ENCODE measurements at regions of chr12 and their contacts with region 1.

Region 1: DNA sequence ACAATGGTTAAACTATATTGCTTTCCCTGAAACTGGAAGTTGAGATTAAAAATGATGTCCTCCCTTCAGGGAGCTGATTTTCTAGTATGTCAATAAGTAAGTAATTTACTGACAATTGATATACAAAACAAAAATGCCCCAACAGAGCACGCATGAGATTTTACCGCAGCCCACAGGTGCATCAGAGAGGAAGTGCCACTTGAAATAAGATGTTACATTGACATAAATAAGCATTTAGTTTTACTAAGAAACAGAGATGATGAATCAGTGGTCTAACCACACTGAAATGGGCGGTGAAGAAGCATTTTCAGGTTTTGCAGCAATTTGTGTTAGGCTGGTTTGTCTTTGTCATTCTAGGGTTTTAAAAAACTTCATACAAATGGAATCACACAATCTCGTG is 8.8 kb upstream of the CLECL1 start:
- DNase-seq: peak; percentile 94
- H3K4me3 Mint-ChIP-seq: peak overlapping the region; percentile 57
- H3K27ac Mint-ChIP-seq: peak overlapping the region; percentile 96
- H3K4me1 Mint-ChIP-seq: peaks cover 61% of the 10 kb centered on the region
- H3K27me3 Mint-ChIP-seq: no peaks in the 10 kb centered on the region

Region 2: DNA sequence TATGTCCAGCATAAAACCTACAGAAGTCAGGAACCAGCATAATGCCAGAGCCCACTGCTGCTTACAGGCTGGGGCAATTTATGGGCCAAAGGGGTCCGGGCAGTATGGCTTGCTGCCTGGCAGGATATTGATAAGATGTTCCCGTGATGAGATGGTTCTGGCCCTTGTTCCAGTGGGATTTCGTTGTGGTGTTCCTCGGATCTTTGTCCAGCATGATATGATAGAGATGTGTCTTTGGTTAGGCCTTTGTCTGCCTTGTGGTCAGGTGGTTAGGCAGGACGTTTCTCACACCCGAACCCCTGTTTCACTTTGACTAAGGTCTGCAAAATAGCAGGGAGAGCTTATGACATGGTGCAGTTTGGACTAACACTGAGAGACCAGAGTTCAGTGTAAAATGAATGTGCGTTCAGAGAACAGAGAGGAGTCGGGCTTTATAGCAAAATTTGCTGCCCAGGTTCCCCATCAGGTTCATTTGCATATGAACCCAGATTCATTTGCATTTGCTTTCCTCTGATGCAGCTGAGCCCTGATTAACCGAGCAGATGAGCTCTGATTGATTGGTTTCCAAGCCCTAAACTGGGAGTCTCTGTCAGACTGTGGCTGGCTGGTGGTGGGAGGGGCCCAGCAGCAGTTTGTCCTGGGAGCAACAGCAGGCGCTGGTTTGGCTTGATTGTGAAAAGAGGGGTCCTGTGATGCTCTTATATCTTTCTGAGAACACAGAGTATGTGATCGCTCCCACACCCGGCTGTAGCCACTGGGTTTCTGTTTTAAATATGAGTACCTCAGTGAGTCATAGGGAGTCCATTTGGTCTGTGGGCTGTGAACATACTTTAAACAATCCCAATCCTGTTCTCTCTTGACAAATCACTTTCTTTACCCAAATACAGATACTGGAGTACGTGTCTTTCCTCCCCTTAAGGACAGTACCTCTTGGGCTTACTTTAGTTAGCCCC is 377.2 kb before region 1 on chr12:
- intact Hi-C with region 1: loop called (anchors 10 kb)
- DNase-seq: peak; percentile 81
- H3K4me3 Mint-ChIP-seq: peak overlapping the region; percentile 66
- H3K27ac Mint-ChIP-seq: peak overlapping the region; percentile 88
- H3K4me1 Mint-ChIP-seq: peaks cover 40% of the 10 kb centered on the region
- H3K27me3 Mint-ChIP-seq: peaks cover 33% of the 10 kb centered on the region

Region 3: DNA sequence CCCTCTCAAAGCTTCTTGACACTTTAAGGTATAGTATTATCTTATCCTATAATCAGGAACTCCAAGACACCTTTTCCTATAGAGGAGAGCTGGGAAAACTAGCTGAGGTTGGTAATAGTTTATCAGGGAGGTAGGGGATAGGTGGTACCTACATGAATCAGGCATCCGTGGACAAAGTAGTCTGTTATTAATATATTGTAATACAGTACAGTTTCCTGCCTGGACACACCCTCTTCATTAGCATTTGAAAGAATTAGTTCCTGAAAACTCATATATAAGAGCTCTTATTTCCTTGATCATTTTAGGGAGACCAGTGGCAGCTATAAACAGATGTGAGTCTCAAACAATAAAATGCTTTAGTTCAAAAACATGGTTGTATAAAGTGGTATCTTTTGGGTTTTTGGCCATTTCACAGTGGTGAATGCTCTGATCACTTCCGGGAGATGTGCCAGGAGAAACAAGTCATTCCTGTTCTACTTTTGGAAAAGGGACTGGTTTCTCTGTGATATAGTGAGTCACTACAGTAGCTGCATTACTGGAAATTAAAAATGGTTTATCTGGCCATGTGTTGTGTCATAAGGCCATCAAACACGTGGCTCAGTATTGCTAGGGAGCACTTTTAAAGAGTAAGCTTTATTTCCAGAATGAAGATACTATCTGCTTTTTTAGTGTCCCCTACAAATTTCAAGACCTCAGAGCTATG is 232.1 kb before region 1 on chr12:
- intact Hi-C with region 1: no loop called
- DNase-seq: no peak
- H3K4me3 Mint-ChIP-seq: no peak overlapping the region
- H3K27ac Mint-ChIP-seq: no peak overlapping the region
- H3K4me1 Mint-ChIP-seq: peaks cover 3% of the 10 kb centered on the region
- H3K27me3 Mint-ChIP-seq: no peaks in the 10 kb centered on the region

Region 4: DNA sequence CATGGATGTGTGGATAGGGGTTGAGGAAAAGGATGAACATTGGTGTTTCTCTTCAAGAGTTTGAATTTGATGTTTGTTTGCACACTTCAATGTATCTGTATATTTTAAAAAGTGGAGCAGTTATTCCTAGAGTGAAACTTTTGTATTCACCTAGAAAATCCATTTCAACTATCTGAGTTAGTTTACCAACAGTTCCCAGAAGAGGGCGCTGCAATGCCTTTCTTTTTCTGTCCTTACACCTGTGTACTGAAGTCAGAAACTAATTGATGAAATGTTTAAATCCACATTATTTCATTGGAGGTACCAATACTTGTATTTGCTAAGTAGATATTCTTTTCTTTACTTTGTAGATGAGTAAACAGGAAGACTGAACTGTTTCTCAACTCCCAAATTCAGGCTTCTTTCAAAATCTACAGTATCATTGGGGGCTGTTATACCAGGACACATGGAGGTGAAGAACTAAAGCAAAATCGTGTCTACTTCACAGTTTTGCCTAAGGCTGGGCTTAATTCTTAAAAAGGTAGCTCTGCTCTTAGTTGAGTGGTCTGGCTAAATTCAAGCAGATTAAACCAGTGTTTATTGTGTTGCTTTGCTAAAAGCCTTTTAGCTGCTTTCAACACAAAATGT is 107.4 kb before region 1 on chr12:
- intact Hi-C with region 1: loop called (anchors 2 kb)
- DNase-seq: peak; percentile 94
- H3K4me3 Mint-ChIP-seq: peak overlapping the region; percentile 64
- H3K27ac Mint-ChIP-seq: peak overlapping the region; percentile 57
- H3K4me1 Mint-ChIP-seq: peaks cover 50% of the 10 kb centered on the region
- H3K27me3 Mint-ChIP-seq: peaks cover 4% of the 10 kb centered on the region

Region 5: DNA sequence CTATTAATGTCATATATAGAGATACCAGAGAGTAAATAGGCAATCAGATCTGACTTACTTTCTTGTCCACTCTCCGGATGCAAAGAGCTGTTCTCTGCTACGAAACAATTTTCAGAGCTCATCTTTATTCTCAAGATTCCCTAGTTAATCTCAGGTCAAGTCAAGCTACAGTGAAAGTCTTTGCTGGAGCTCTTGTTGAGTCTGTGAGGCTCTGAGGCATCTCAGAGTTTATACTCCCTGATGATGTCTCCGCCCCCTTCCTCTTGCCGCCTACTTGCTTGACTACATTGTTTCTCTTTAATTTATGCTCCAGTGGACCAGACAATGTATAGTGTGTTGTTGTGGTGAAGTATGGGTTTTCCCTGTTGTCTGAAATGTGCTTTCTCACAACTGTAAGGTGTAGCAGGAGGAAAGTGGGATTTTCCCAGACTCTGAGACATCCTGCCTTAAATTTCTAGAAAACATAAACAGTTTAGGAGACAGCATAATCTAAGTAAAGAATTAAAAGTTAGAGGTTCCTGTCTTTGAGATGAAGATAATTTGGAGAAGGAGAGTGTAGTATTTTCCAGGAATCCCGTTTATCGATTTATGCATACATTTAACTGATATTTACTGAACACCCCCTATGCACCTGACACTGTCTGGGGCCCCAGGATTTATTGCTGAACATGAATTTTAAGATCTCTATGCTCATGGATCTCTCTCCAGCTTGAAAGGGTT is 19.1 kb after region 1 on chr12 and contains the start of gene CD69:
- intact Hi-C with region 1: loop called (anchors 1 kb)
- DNase-seq: peak; percentile 96
- H3K4me3 Mint-ChIP-seq: peak within 1 kb of the TSS; percentile 94
- H3K27ac Mint-ChIP-seq: peak within 1 kb of the TSS; percentile 98
- H3K4me1 Mint-ChIP-seq: peaks cover 48% of the 10 kb centered on the region
- H3K27me3 Mint-ChIP-seq: peaks cover 5% of the 10 kb centered on the region
- total RNA-seq, gene CD69: 106 and 111 TPM in 2 replicates

Region 6: GRCh38 chr12:9948606-9949296 is 207.0 kb after region 1 on chr12:
- intact Hi-C with region 1: loop called (anchors 2 kb)
- DNase-seq: peak; percentile 78
- H3K4me3 Mint-ChIP-seq: peak overlapping the region; percentile 27
- H3K27ac Mint-ChIP-seq: peak overlapping the region; percentile 52
- H3K4me1 Mint-ChIP-seq: peaks cover 52% of the 10 kb centered on the region
- H3K27me3 Mint-ChIP-seq: no peaks in the 10 kb centered on the region

Measured in activated CD4-positive, alpha-beta T cell treated with anti-CD3 and anti-CD28 coated beads, Interleukin-2, amount 10 ng/mL, durations not matched to agents 24 days and 14 days (primary cell).